ENCODE measurements at regions of chr15 and their contacts with region 1.

Region 1: DNA sequence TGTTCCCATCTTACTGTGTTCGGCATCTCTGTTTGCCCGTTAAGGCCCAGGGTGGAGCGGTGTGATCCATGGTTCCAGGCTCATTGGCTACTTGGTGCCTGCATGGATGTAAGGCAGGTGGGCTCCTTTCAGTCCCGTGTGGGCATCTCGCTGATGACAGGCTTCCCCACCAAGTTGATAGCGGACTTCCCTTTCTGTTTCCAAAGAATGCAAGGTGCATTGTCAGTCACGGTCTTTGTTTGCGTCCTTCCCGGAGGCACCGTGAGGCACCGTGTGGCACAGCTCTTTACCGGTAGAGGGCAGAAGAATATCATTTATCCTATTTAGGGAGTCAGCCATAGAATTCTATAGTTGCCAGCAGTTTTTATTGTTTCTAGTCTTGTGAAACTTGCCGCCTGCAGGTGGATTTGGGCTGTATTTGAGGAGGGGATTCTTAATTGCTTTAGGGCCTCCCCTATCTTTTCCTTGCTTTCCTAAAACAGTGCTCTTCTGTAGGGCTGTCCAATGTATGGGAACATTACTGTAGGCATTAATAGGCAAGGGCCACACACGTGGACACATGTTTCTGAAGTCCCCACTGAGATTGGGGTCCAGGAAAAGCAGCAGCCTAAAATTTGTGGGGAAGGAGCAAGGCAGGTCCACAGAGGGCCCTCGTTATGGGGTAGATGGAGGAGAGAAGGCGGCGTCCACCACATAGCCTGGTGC is 244.1 kb downstream of the SLCO3A1 start:
- DNase-seq: no peak
- H3K4me3 ChIP-seq: no peak overlapping the region
- H3K27ac ChIP-seq: no peak overlapping the region
- H3K4me1 ChIP-seq: peaks cover 23% of the 10 kb centered on the region
- H3K27me3 ChIP-seq: no peaks in the 10 kb centered on the region
- CTCF ChIP-seq: peak; percentile 83

Region 2: GRCh38 chr15:92226014-92226612 is 128.5 kb after region 1 on chr15:
- intact Hi-C with region 1: loop called (anchors 5 kb)
- DNase-seq: no peak
- H3K4me3 ChIP-seq: no peak overlapping the region
- H3K27ac ChIP-seq: no peak overlapping the region
- H3K4me1 ChIP-seq: no peaks in the 10 kb centered on the region
- H3K27me3 ChIP-seq: no peaks in the 10 kb centered on the region
- CTCF ChIP-seq: peak; percentile 68

Measured in left ventricle myocardium inferior (tissue), 1 donor.